ENCODE measurements at regions of chrX and their contacts with region 1.

Region 1: GRCh38 chrX:83630662-83631061 is 122.6 kb downstream of the POU3F4 start:
- DNase-seq: no peak
- H3K4me3 ChIP-seq: no peak overlapping the region
- H3K27ac ChIP-seq: no peak overlapping the region
- H3K4me1 ChIP-seq: peaks cover 0 to 7% (median 0%) of the 10 kb centered on the region in 4 donors
- H3K27me3 ChIP-seq: no peaks in the 10 kb centered on the region
- CTCF ChIP-seq: no peak
- EP300 ChIP-seq: no peak
- POLR2A ChIP-seq: no peak

Region 2: GRCh38 chrX:83469551-83469950 is 161.1 kb before region 1 on chrX:
- intact Hi-C with region 1: loop called (anchors 2 kb)
- DNase-seq: no peak
- H3K4me3 ChIP-seq: no peak overlapping the region
- H3K27ac ChIP-seq: no peak overlapping the region
- H3K4me1 ChIP-seq: no peaks in the 10 kb centered on the region
- H3K27me3 ChIP-seq: no peaks in the 10 kb centered on the region
- CTCF ChIP-seq: peak in 1 of 4 experiments; percentile 24
- EP300 ChIP-seq: no peak
- POLR2A ChIP-seq: no peak

Region 3: DNA sequence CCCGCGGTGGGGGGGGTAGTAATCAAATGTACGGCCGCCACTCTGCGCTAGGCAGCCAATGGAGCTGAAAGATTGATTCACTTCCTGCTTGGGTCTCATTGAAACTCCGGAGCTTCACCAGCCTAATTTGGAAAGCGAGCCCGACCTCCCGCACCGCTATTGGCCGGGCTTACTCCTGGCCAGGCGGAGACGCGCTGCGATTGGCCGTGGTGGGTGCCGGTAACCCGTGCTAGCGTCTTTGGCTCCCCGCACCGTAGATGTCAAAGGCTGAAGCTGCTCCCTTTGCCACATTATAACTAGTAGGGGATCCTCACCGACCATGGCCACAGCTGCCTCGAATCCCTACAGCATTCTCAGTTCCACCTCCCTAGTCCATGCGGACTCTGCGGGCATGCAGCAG is 122.7 kb before region 1 on chrX and contains the start of gene POU3F4:
- intact Hi-C with region 1: loop called (anchors 5 kb)
- DNase-seq: peak; percentile 76
- H3K4me3 ChIP-seq: peak within 1 kb of the TSS; percentile 14 to 42 (median 22)
- H3K27ac ChIP-seq: peak within 1 kb of the TSS in 3 of 4 donors; percentile 20 to 63 (median 39)
- H3K4me1 ChIP-seq: no peaks in the 10 kb centered on the region
- H3K27me3 ChIP-seq: peaks cover 0 to 51% (median 27%) of the 10 kb centered on the region in 3 donors
- CTCF ChIP-seq: no peak
- EP300 ChIP-seq: no peak
- POLR2A ChIP-seq: no peak
- total RNA-seq, gene POU3F4: 0.28 to 0.71 (median 0.33) TPM in 3 of 4 donors, not detected in the other

Measured in sigmoid colon (tissue), 7 donors.